ENCODE measurements at regions of chr12 and their contacts with region 1.

Region 1: DNA sequence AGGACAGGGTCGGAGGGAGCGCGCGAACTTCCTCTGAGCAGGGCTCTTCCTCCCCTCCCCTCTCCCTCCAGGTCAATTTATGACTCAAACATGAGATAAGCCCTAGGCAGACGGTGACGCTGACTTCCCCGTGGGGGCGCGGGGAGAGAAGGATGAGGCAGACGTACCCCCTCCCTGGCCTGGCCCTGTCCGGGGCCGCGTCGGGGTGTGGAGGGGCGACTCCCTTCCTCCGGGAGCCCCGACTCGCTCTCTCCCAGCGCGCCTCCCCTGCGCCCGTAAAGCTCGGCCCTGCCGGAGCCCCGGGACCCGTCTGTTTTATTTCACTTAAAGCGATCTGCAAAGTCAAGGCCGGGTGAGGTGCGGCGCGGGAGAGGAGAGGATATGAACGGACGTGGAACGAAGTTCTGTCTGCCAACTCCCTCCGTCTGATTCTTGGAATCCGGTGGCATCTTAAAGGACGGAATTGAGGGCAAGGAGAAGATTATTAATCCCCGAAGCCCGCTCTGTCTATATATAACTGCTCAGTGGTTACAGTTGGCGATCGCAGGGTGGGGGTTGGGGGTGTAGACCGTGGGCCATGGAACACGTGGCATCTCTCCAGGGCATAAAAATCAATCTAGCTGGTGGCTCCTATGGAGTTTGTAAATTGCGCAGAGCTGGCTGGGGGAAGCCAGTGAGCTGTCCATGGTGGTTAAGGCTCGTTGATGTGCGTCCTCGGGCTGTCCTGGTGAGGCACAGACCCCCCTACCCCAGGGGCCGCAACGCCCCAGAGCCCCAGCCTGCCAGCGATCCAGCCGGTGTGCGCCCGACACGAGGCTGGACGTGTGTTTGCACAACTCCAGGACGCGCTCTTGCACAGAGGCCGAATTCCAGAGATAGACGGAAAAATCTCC is 3.0 kb upstream of the PTHLH start:
- DNase-seq: peak; percentile 29
- ATAC-seq: peak; percentile 49

Region 2: DNA sequence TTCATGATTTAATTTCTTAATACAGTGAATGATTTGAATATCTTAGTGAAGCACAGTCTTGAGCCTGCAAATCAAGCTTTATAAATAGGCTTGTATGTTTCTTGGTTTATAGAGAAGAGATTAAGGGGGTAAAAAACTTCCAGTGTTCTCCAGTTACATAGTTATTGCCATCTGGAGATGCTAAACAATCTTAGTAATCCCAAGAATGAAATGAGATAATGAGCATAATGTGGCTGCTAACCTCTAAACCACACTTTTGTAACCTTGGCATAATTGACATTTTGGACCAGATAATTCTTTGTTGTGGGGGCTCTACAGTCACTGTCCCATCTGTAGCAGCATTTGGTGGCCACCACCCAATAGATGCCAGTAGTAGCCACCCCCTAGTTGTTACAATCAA is 531.5 kb after region 1 on chr12:
- intact Hi-C with region 1: no loop called
- DNase-seq: no peak
- ATAC-seq: no peak

Region 3: DNA sequence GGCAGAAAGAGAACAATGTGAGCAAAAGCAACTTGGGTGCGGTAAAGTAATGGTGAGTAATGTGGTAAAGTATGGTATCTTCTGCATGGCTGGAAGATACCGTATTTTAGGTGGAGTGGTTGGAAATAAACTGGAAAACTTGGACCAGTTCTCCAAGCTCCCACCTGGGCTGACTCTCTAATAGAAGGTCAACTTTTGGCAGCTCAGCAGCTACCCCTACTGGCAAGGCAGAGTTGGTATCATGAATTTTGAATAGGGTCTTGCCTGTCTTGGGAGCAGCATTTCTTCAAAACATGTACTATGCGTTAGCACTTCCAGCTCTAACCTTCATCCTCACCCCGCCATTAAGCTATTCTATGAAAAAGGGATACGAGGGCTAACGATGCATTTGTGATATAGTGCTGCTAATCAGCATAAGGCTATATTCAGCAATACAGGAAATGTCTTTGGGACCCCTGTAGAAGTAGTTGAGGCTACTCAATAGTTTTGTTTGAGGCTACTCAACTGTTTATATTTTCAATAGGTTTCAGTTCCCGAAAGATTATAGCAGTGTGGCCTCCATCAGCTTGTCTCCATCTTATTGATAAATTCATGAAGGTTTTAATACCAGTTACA is 897.3 kb after region 1 on chr12:
- intact Hi-C with region 1: loop called (anchors 5 kb)
- DNase-seq: peak; percentile 30
- ATAC-seq: peak; percentile 60